ENCODE measurements at regions of chr10 and their contacts with region 1.

Region 1: DNA sequence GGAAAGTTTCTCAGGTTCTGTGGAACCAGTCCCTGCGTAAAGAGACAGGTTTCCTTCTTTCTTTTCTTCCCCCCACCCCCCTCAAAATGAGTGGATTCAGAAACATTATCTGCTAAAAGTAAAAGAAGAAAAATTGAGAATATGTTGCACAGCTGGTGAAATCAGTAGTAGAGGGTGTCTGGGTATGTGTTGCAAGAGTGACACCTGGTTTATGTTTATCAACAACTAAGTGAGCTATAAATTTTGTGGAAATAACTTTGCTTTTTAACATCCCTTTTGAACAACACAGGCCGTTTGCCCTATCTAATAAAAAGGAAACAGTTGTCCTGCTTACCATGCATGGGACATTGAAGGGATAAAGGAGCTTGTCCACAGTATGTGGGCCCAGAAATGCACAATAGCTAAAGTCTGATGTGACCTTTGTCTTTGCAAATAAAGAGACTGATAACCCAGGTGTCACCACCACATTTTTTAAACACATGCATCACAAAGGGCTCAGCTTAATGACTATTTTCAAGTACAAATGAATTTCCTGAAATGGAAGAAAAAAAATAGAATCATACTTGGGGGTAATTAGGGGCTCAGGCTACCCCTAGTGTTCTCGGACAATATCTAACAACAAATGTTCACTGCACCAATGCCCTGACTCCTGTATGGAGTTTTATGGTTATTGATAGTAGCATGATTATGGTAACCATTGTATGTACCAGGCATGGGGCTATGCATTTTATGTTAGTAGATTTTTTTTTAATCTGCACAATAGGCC is 221.7 kb upstream of the TCF7L2 start:
- DNase-seq: peak; percentile 66 to 69
- H3K4me3 ChIP-seq: no peak overlapping the region
- H3K4me3 Mint-ChIP-seq: peak overlapping the region; percentile 50
- H3K27ac Mint-ChIP-seq: peak overlapping the region; percentile 94
- H3K4me1 ChIP-seq: peaks cover 78% of the 10 kb centered on the region
- H3K4me1 Mint-ChIP-seq: peaks cover 70% of the 10 kb centered on the region
- H3K27me3 ChIP-seq: no peaks in the 10 kb centered on the region
- H3K27me3 Mint-ChIP-seq: no peaks in the 10 kb centered on the region
- CTCF ChIP-seq: no peak

Region 2: DNA sequence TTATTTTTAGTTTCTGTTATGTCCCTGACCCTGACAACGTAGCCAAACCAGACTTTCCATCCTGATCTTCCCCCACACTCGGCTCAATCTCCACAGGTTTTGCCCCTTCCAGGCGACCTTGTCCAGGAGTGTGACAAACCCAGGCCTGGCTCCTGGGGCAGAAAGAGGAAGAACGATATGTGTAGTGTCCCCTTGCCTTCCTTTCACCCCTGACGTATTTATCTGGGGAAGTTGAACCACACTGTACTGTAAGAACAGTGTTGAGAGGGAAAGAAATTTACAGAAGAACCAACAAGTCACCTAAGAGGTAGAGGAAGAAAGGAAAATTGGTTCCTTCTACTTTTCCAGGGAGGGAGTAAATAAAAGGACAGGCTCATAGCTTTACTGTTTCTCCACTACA is 123.2 kb before region 1 on chr10:
- CTCF ChIA-PET with region 1: no interaction called
- POLR2A ChIA-PET with region 1: no interaction called
- intact Hi-C with region 1: no loop called
- DNase-seq: no peak
- H3K4me3 ChIP-seq: no peak overlapping the region
- H3K4me3 Mint-ChIP-seq: no peak overlapping the region
- H3K27ac Mint-ChIP-seq: no peak overlapping the region
- H3K4me1 ChIP-seq: peaks cover 6% of the 10 kb centered on the region; the same call in 1 of the 2 replicates
- H3K4me1 Mint-ChIP-seq: peaks cover 4% of the 10 kb centered on the region
- H3K27me3 ChIP-seq: no peaks in the 10 kb centered on the region
- H3K27me3 Mint-ChIP-seq: no peaks in the 10 kb centered on the region
- CTCF ChIP-seq: no peak

Region 3: GRCh38 chr10:112631501-112632410 is 96.5 kb before region 1 on chr10:
- CTCF ChIA-PET with region 1: no interaction called
- POLR2A ChIA-PET with region 1: no interaction called
- intact Hi-C with region 1: loop called (anchors 5 kb)
- DNase-seq: peak; percentile 62 to 67
- H3K4me3 ChIP-seq: no peak overlapping the region
- H3K4me3 Mint-ChIP-seq: peak overlapping the region; percentile 31
- H3K27ac Mint-ChIP-seq: peak overlapping the region; percentile 89
- H3K4me1 ChIP-seq: peaks cover 20% of the 10 kb centered on the region
- H3K4me1 Mint-ChIP-seq: peaks cover 46% of the 10 kb centered on the region
- H3K27me3 ChIP-seq: no peaks in the 10 kb centered on the region
- H3K27me3 Mint-ChIP-seq: no peaks in the 10 kb centered on the region
- CTCF ChIP-seq: peak in 1 of 2 experiments; percentile 50

Region 4: GRCh38 chr10:112741830-112742411 is 13.6 kb after region 1 on chr10:
- CTCF ChIA-PET with region 1: no interaction called
- POLR2A ChIA-PET with region 1: no interaction called
- intact Hi-C with region 1: loop called (anchors 1 kb)
- DNase-seq: no peak
- H3K4me3 ChIP-seq: no peak overlapping the region
- H3K4me3 Mint-ChIP-seq: no peak overlapping the region
- H3K27ac Mint-ChIP-seq: no peak overlapping the region
- H3K4me1 ChIP-seq: peaks cover 82% of the 10 kb centered on the region
- H3K4me1 Mint-ChIP-seq: peaks cover 70% of the 10 kb centered on the region
- H3K27me3 ChIP-seq: no peaks in the 10 kb centered on the region
- H3K27me3 Mint-ChIP-seq: no peaks in the 10 kb centered on the region
- CTCF ChIP-seq: no peak

Region 5: GRCh38 chr10:112750427-112751167 is 22.3 kb after region 1 on chr10:
- CTCF ChIA-PET with region 1: no interaction called
- POLR2A ChIA-PET with region 1: interaction called, 6 read pairs
- intact Hi-C with region 1: loop called (anchors 2 kb)
- DNase-seq: peak in 1 of 2 experiments; percentile 52
- H3K4me3 ChIP-seq: no peak overlapping the region
- H3K4me3 Mint-ChIP-seq: peak overlapping the region; percentile 42
- H3K27ac Mint-ChIP-seq: peak overlapping the region; percentile 87
- H3K4me1 ChIP-seq: peaks cover 69% of the 10 kb centered on the region
- H3K4me1 Mint-ChIP-seq: peaks cover 58% of the 10 kb centered on the region
- H3K27me3 ChIP-seq: no peaks in the 10 kb centered on the region
- H3K27me3 Mint-ChIP-seq: no peaks in the 10 kb centered on the region
- CTCF ChIP-seq: no peak

Region 6: GRCh38 chr10:112763916-112764520 is 35.7 kb after region 1 on chr10:
- CTCF ChIA-PET with region 1: no interaction called
- POLR2A ChIA-PET with region 1: no interaction called
- intact Hi-C with region 1: no loop called
- DNase-seq: no peak
- H3K4me3 ChIP-seq: no peak overlapping the region
- H3K4me3 Mint-ChIP-seq: no peak overlapping the region
- H3K27ac Mint-ChIP-seq: no peak overlapping the region
- H3K4me1 ChIP-seq: peaks cover 41% of the 10 kb centered on the region
- H3K4me1 Mint-ChIP-seq: peaks cover 56% of the 10 kb centered on the region
- H3K27me3 ChIP-seq: no peaks in the 10 kb centered on the region
- H3K27me3 Mint-ChIP-seq: no peaks in the 10 kb centered on the region
- CTCF ChIP-seq: no peak

Region 7: GRCh38 chr10:112898540-112899395 is 170.5 kb after region 1 on chr10:
- CTCF ChIA-PET with region 1: no interaction called
- POLR2A ChIA-PET with region 1: no interaction called
- intact Hi-C with region 1: loop called (anchors 5 kb)
- DNase-seq: peak; percentile 83 to 92
- H3K4me3 ChIP-seq: peak overlapping the region; percentile 36
- H3K4me3 Mint-ChIP-seq: peak overlapping the region; percentile 84
- H3K27ac Mint-ChIP-seq: peak overlapping the region; percentile 88
- H3K4me1 ChIP-seq: peaks cover 20% of the 10 kb centered on the region
- H3K4me1 Mint-ChIP-seq: peaks cover 12% of the 10 kb centered on the region
- H3K27me3 ChIP-seq: no peaks in the 10 kb centered on the region
- H3K27me3 Mint-ChIP-seq: no peaks in the 10 kb centered on the region
- CTCF ChIP-seq: no peak

Measured in Caco-2 (cell line).